WTC11 (cell line): ENCODE measurements at regions of chr1 and their contacts with region 1.

Region 1: GRCh38 chr1:17606826-17607440 is 67.4 kb downstream of the ARHGEF10L start:
- DNase-seq: peak; percentile 88
- ATAC-seq: peak; percentile 65
- H3K4me3 Mint-ChIP-seq: no peak overlapping the region
- H3K27ac Mint-ChIP-seq: no peak overlapping the region; the same call in none of the 2 replicates
- H3K4me1 Mint-ChIP-seq: peaks cover 22% of the 10 kb centered on the region
- H3K27me3 Mint-ChIP-seq: no peaks in the 10 kb centered on the region
- CTCF ChIP-seq: peak; percentile 91

Region 2: DNA sequence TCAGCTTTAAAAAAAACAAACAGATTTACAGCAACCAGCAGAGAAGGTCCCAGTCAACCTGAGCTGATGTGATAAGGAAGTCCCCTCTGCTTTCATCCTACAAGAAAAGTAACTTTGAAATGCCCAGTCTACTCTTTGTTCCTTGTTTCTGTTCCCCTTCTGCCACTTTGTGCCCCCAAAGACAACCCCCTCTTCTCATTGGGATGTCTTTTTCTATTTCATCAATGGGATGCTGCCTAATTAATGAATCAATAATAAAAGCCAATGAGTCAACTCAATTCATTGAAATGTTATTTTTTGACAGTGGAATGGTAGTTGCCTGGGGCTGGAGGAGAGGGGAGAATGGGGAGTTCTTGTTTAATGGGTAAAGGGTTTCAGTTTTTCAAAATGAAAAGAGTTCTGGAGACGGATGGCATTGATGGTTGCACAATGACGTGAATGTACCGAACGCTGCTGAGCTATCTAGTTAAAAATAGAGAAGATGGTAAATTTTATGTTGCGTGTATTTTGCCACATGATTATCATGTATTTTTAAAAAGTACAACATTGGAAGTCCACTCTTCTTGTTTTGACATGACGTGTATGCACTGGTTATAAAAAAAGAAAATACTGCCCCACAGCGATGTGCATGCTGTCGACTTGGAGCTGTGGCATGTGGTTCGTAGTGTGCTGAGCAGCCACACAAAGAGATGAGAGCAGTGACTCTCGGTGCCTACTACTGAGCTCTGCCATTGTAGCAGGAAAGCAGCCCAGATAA is 465.3 kb before region 1 on chr1:
- CTCF ChIA-PET with region 1: no interaction called
- POLR2A ChIA-PET with region 1: no interaction called
- DNase-seq: no peak
- ATAC-seq: no peak
- H3K4me3 Mint-ChIP-seq: no peak overlapping the region
- H3K27ac Mint-ChIP-seq: no peak overlapping the region
- H3K4me1 Mint-ChIP-seq: peaks cover 10% of the 10 kb centered on the region
- H3K27me3 Mint-ChIP-seq: no peaks in the 10 kb centered on the region; the same call in 1 of the 2 replicates
- CTCF ChIP-seq: no peak

Region 3: GRCh38 chr1:17494114-17494729 is 112.7 kb before region 1 on chr1:
- CTCF ChIA-PET with region 1: interaction called, 273 read pairs
- POLR2A ChIA-PET with region 1: no interaction called
- DNase-seq: peak; percentile 91
- ATAC-seq: peak; percentile 97
- H3K4me3 Mint-ChIP-seq: no peak overlapping the region
- H3K27ac Mint-ChIP-seq: peak overlapping the region; percentile 40; the same call in 1 of the 2 replicates
- H3K4me1 Mint-ChIP-seq: peaks cover 23% of the 10 kb centered on the region
- H3K27me3 Mint-ChIP-seq: no peaks in the 10 kb centered on the region
- CTCF ChIP-seq: peak; percentile 97

Region 4: GRCh38 chr1:17520071-17520813 is 86.7 kb before region 1 on chr1:
- CTCF ChIA-PET with region 1: interaction called, 15 read pairs
- POLR2A ChIA-PET with region 1: no interaction called
- DNase-seq: no peak
- ATAC-seq: no peak; the same call in 1 of the 2 replicates
- H3K4me3 Mint-ChIP-seq: no peak overlapping the region
- H3K27ac Mint-ChIP-seq: peak overlapping the region; percentile 19; the same call in 1 of the 2 replicates
- H3K4me1 Mint-ChIP-seq: peaks cover 51% of the 10 kb centered on the region
- H3K27me3 Mint-ChIP-seq: no peaks in the 10 kb centered on the region
- CTCF ChIP-seq: no peak

Region 5: DNA sequence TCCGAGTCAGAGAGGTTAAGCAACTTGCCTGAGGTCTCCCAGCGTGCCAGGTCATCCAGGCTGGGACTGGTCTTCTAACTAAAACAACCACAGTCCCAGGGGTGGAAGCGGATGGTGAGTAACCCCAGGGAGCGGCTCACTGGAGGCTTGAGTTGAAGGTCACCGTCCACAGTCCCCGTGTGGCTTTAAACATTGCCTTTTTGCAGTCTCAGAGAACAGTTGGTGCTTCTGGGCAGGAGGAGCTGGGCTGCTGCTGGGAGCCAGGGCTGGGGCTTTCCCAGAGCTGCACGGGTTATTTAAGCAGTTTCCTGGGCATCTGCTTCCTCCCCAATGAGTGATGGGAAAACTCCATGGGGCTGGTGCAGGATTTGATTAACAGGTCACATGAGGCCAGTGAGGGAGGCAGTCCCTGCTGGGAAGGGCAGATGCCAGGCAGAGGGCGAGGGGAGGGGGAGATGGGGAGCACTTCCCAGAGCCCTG is 55.1 kb before region 1 on chr1:
- CTCF ChIA-PET with region 1: interaction called, 57 read pairs
- POLR2A ChIA-PET with region 1: no interaction called
- DNase-seq: no peak
- ATAC-seq: peak; percentile 4
- H3K4me3 Mint-ChIP-seq: peak overlapping the region; percentile 16; the same call in 1 of the 2 replicates
- H3K27ac Mint-ChIP-seq: peak overlapping the region; percentile 94
- H3K4me1 Mint-ChIP-seq: peaks cover 90% of the 10 kb centered on the region
- H3K27me3 Mint-ChIP-seq: no peaks in the 10 kb centered on the region
- CTCF ChIP-seq: no peak

Region 6: DNA sequence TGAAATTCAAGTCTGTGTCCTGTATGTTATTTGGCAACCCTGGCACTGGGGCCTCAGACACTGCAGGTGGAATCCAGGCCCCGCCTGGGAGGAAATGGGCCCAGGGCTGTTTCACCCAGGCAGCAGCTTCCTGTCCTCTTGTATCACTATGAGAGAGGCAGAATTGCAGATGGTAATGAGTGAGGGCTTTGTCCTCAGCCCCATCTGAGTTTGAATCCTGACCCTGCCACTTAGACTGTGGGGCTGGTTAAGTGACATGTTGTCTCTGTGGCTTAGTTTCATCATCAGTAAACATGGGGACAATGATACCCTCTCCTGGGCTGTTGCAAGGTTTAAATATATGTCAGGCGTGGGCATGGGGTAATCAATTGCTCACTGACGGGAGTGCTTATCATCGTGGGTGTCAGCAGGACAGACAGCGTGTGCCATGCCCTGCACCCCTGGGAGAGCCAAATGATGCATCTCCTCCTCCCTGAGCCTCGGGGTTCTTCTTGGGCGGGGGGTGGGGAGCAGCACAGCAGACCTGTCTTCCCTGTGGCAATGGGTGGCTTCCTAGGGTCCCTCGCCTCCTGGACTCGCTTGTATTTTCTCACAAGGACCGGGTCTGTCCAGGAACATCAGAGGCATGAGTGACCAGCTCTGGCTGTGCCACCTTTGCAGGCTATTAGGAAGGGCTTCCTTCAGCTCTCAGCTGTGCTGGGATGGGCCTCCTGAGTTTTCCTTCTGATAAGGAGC is 25.4 kb before region 1 on chr1:
- CTCF ChIA-PET with region 1: interaction called, 253 read pairs
- POLR2A ChIA-PET with region 1: no interaction called
- DNase-seq: no peak
- ATAC-seq: peak; percentile 66
- H3K4me3 Mint-ChIP-seq: no peak overlapping the region
- H3K27ac Mint-ChIP-seq: peak overlapping the region; percentile 43
- H3K4me1 Mint-ChIP-seq: peaks cover 63% of the 10 kb centered on the region
- H3K27me3 Mint-ChIP-seq: no peaks in the 10 kb centered on the region
- CTCF ChIP-seq: no peak

Region 7: GRCh38 chr1:17596651-17597509 is 10.1 kb before region 1 on chr1:
- CTCF ChIA-PET with region 1: interaction called, 27 read pairs
- POLR2A ChIA-PET with region 1: no interaction called
- DNase-seq: no peak
- ATAC-seq: no peak
- H3K4me3 Mint-ChIP-seq: no peak overlapping the region
- H3K27ac Mint-ChIP-seq: peak overlapping the region; percentile 71; the same call in 1 of the 2 replicates
- H3K4me1 Mint-ChIP-seq: peaks cover 20% of the 10 kb centered on the region
- H3K27me3 Mint-ChIP-seq: no peaks in the 10 kb centered on the region
- CTCF ChIP-seq: no peak

Region 8: GRCh38 chr1:17678011-17678410 is 71.1 kb after region 1 on chr1:
- CTCF ChIA-PET with region 1: no interaction called
- POLR2A ChIA-PET with region 1: no interaction called
- DNase-seq: no peak
- ATAC-seq: no peak
- H3K4me3 Mint-ChIP-seq: no peak overlapping the region
- H3K27ac Mint-ChIP-seq: no peak overlapping the region
- H3K4me1 Mint-ChIP-seq: 0 out of 2 replicates have a peak, but pooled peaks cover under 1% of the 10 kb centered on the region
- H3K27me3 Mint-ChIP-seq: no peaks in the 10 kb centered on the region
- CTCF ChIP-seq: no peak

Region 9: GRCh38 chr1:17878837-17879236 is 271.9 kb after region 1 on chr1:
- CTCF ChIA-PET with region 1: no interaction called
- POLR2A ChIA-PET with region 1: no interaction called
- DNase-seq: no peak
- ATAC-seq: no peak
- H3K4me3 Mint-ChIP-seq: no peak overlapping the region
- H3K27ac Mint-ChIP-seq: no peak overlapping the region
- H3K4me1 Mint-ChIP-seq: peaks cover 12% of the 10 kb centered on the region
- H3K27me3 Mint-ChIP-seq: peaks cover 5% of the 10 kb centered on the region
- CTCF ChIP-seq: no peak